Activated T-helper 1 cell treated with anti-CD3 and anti-CD28 coated beads, Interleukin-12 subunit alpha, Interleukin-12 subunit beta, Interleukin-2, Interleukin-4 antibody, amounts not matched to agents 30 ng/mL and 10 ng/mL and 1 ng/mL, durations not matched to agents 14 hours and 24 hours and 36 hours (primary cell): ENCODE measurements at regions of chr10 and their contacts with region 1.

Region 1: GRCh38 chr10:95601116-95601719 is 40.0 kb upstream of the SORBS1 start:
- DNase-seq: peak; percentile 17
- H3K4me3 Mint-ChIP-seq: no peak overlapping the region
- H3K27ac Mint-ChIP-seq: no peak overlapping the region
- H3K4me1 Mint-ChIP-seq: no peaks in the 10 kb centered on the region
- H3K27me3 Mint-ChIP-seq: peaks cover 7% of the 10 kb centered on the region

Region 2: DNA sequence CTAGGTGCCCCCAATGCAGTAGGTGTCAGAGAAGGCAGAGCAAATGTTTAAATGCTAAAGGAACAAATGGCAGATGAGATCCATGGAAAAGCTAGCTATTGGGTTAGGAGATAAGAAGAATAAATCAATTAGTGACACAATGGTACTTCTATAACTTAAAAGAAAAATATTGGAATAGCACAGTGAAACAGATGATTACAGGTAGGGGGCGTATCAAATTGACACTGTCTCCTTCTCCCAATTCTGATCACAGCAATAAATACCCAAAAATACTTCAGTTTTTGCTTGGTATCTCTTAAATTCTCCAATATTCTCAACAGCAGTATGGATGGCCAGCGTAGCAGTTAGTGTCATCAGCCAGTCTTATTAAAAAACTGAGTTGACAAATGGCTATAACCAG is 1904.0 kb before region 1 on chr10:
- intact Hi-C with region 1: no loop called
- DNase-seq: no peak
- H3K4me3 Mint-ChIP-seq: no peak overlapping the region
- H3K27ac Mint-ChIP-seq: no peak overlapping the region
- H3K4me1 Mint-ChIP-seq: peaks cover 22% of the 10 kb centered on the region
- H3K27me3 Mint-ChIP-seq: no peaks in the 10 kb centered on the region

Region 3: DNA sequence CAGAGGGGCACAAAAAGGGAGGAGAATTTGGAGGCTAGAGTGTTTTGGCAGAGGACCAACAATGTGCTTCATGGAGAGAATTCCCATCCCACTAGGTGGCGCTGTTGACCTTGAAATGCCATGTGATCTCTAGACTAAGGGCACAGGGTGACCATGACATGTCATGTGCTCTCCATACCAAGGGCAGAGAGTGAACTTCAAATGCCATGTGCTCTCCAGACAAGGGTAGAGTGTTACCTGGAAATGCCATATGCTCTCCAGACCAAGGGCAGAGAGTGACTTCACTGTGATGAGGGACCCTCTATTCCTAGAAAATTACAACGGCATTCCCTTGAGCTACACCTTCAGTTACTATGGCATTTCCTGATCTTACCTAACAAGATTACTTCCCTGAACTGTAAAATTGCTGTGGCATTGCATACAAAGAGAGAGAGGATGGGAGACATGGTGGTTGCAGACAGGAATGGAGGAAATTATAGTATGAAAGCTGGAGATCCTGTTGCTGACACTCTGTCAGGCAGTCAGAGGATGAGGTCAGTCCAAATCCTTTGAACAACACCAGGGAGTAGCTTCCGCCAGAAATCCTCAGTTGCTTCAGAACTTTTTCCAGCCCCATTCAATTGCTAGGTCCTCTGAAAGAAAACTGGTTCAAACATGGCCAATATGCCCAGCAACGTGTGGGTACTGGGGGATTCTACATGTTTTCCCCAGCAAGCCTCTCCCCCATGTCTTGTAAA is 468.0 kb before region 1 on chr10:
- intact Hi-C with region 1: loop called (anchors 5 kb)
- DNase-seq: peak; percentile 60
- H3K4me3 Mint-ChIP-seq: no peak overlapping the region
- H3K27ac Mint-ChIP-seq: no peak overlapping the region
- H3K4me1 Mint-ChIP-seq: no peaks in the 10 kb centered on the region
- H3K27me3 Mint-ChIP-seq: peaks cover 4% of the 10 kb centered on the region

Region 4: GRCh38 chr10:95374597-95375209 is 226.5 kb before region 1 on chr10:
- intact Hi-C with region 1: loop called (anchors 1 kb)
- DNase-seq: peak; percentile 59
- H3K4me3 Mint-ChIP-seq: no peak overlapping the region
- H3K27ac Mint-ChIP-seq: no peak overlapping the region
- H3K4me1 Mint-ChIP-seq: peaks cover 14% of the 10 kb centered on the region
- H3K27me3 Mint-ChIP-seq: peaks cover 9% of the 10 kb centered on the region

Region 5: DNA sequence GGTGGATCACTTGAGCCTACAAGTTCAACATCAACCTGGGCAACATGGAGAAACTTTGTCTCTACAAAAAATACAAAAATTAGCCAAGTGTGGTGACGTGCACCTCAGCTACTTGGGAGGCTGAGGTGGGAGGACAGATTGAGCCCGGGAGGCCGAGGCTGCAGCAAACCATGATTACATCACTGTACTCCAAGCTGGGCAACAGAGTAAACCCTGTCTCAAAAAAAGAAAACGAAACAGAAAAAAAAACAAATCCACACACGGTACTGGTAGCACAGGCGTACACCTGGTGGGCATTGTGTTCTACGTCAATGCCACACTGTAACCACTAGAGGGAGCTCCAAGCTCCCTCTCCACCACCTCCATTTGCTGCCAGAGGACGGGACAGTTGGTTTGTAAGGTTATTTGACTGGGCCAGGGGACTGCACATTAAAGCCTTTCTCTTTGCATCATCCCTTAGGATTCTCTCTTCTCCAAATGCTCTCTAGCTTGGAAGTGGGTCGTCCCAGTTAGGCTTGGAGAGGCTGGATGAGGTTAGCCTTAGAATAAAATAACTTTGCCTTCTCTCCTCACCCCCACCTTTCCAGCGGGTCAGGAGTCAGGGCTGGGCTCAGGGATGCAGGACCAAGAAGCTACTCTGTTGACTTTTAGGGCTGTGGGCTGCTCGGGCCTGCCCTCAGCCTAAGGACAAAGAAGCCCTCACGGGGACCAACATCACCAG is 170.8 kb before region 1 on chr10:
- intact Hi-C with region 1: loop called (anchors 1 kb)
- DNase-seq: peak; percentile 23
- H3K4me3 Mint-ChIP-seq: no peak overlapping the region
- H3K27ac Mint-ChIP-seq: no peak overlapping the region
- H3K4me1 Mint-ChIP-seq: no peaks in the 10 kb centered on the region
- H3K27me3 Mint-ChIP-seq: peaks cover 6% of the 10 kb centered on the region

Region 6: DNA sequence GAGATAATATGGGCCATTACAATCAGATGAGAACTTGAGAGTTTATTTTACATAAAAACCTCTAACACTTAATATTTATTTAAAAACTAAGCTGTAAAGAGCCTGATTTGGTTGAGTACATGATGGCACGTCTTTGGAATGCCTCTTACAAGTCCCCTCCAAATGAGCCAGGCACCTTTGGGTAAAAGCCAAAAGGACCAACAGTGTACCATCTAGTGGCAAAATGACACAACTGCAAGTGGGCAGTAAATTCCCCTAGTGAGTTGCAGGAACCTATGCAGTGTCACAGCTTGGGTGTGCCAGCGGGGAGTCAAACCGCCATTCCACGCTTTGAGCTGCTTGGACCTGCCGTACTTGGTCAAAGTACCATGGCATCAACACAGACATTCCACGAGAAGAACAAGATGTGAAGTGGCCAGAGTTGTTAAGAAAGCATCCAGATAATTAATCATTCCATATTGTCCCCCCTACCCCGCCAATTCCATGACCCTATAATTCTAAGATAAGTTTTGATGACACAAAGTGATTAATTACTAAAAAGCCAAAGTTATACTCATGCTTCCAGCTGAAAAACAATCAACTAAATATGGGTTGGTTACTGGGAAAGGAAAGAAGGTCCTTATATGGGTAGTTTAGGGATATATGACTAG is 155.3 kb before region 1 on chr10:
- intact Hi-C with region 1: loop called (anchors 5 kb)
- DNase-seq: peak; percentile 4
- H3K4me3 Mint-ChIP-seq: no peak overlapping the region
- H3K27ac Mint-ChIP-seq: no peak overlapping the region
- H3K4me1 Mint-ChIP-seq: peaks cover 4% of the 10 kb centered on the region
- H3K27me3 Mint-ChIP-seq: peaks cover 20% of the 10 kb centered on the region